K562 (cell line): ENCODE measurements at regions of chr1 and their contacts with region 1.

Region 1: GRCh38 chr1:44049839-44050238 is 18.6 kb upstream of the SLC6A9 start:
- DNase-seq: no peak
- ATAC-seq: no peak
- H3K4me3 ChIP-seq: no peak overlapping the region
- H3K27ac ChIP-seq: no peak overlapping the region
- H3K4me1 ChIP-seq: peaks cover 10 to 30% of the 10 kb centered on the region in 2 experiments; a peak in 4 of 5 replicates
- H3K27me3 ChIP-seq: no peaks in the 10 kb centered on the region
- CTCF ChIP-seq: no peak
- EP300 ChIP-seq: no peak
- POLR2A ChIP-seq: no peak
- RAD21 ChIP-seq: no peak

Region 2: DNA sequence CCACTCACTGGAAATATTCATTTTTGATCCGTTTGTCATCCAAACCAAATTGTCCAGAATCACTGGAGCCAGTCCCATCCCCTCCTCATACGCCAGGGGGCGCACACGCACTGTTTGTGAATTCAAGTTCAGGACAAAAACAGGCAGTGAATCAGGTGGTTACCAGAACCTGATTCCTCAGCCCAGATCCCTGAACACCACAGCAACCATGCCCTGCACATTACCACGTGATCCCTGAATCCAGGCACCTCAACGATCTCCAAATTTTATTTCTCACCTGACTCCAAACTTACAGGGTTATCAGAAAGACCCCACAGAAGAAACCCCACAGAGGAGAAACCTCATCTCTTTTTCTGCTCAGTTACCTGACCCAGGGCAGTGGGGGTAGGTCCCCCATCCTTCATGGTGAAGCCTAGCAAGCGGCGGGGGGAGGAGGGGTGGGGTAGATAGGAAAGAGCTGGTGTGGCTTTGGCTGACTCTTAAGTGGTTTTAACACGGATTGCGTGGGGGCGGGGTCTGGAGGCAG is 520.6 kb before region 1 on chr1:
- CTCF ChIA-PET with region 1: no interaction called
- POLR2A ChIA-PET with region 1: no interaction called
- in situ Hi-C with region 1: loop called (anchors 5 kb)
- intact Hi-C with region 1: loop called (anchors 2 kb)
- DNase-seq: peak; percentile 76 to 92 (median 83)
- ATAC-seq: peak; percentile 84
- H3K4me3 ChIP-seq: no peak overlapping the region
- H3K27ac ChIP-seq: no peak overlapping the region
- H3K4me1 ChIP-seq: peaks cover 12 to 28% of the 10 kb centered on the region in 2 experiments; a peak in 4 of 5 replicates
- H3K27me3 ChIP-seq: peaks cover 26 to 37% of the 10 kb centered on the region in 2 experiments; a peak in 4 of 5 replicates
- CTCF ChIP-seq: peak; percentile 89 to 98 (median 98)
- EP300 ChIP-seq: no peak
- POLR2A ChIP-seq: no peak
- RAD21 ChIP-seq: peak; percentile 91 to 98

Region 3: DNA sequence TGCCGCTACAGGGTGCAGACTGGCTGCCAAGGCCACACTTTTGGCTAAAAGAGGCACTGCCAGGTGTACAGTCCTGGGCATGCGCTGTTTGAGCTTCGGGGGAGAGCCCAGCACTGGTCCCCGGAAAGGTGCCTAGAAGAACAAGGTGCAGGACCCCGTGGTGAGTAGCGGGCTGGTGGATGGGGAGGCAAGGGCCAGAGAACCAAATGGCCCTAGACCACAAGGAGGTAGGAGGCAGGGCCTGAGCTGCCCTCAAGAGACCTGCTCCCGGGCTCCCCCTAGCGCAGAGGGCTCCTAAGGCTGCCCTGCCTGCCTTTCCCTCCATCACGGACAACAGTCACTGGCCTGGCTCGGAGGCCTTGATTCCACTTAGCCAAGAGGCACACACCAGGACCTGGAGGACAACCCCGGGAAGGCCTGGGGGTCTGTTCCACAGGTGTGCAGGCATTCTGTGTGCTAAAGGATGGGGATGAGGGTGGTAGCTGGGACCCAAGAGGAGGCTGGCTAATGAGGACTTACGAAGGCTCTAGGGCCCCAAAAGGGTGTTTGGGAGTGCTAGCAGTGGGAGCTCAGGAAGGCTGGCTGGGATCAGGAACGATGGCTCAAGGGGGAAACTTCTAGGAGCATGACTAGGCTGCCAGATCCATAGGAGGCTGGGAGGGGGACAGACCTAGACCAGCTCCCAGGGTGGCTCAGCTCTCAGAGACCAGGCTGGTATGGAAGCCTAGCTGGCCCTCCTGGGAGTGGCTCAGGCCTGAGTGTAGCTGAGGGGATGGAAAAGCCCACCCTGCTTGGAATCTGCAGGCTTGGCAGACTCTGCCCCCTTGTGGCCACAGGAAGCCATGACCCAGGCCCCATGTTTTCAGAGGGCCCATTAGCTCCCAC is 115.5 kb before region 1 on chr1:
- CTCF ChIA-PET with region 1: no interaction called
- POLR2A ChIA-PET with region 1: interaction called, 3 read pairs
- in situ Hi-C with region 1: no loop called
- intact Hi-C with region 1: loop called (anchors 5 kb)
- DNase-seq: peak; percentile 86 to 90 (median 88)
- ATAC-seq: peak; percentile 95
- H3K4me3 ChIP-seq: no peak overlapping the region
- H3K27ac ChIP-seq: no peak overlapping the region
- H3K4me1 ChIP-seq: peaks cover 12 to 32% of the 10 kb centered on the region in 2 experiments; a peak in 4 of 5 replicates
- H3K27me3 ChIP-seq: no peaks in the 10 kb centered on the region
- CTCF ChIP-seq: peak; percentile 95 to 99 (median 98)
- EP300 ChIP-seq: no peak
- POLR2A ChIP-seq: no peak
- RAD21 ChIP-seq: peak; percentile 89 to 97

Region 4: DNA sequence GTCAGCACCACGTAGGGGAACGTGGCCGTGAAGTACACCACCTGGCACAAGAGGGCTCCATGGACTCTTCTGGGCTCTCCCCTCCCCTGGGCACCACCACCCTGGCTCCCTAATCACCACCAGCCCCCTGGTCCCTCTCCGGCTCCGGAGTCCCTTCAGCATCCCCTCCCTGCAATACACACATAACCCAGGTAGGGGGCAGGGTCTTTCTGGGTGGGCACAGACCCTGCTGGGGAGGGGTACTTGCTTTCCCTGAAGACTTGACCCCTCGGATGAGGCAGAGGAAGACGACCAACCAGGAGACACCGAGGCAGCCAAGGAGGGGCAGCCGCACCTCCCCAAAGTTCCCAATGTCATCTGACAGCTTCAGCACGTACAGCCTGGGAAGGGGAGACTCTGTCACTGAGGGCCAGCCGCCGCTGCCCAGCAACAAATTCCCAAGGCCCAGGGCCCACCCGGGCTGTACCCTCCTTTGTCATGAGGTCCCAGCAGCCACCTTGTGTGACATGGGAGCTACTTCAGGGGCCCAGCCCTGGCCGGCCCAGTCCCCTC is 47.2 kb before region 1 on chr1:
- CTCF ChIA-PET with region 1: interaction called, 33 read pairs
- POLR2A ChIA-PET with region 1: interaction called, 3 read pairs
- in situ Hi-C with region 1: no loop called
- intact Hi-C with region 1: loop called (anchors 1 kb)
- DNase-seq: no peak
- ATAC-seq: no peak
- H3K4me3 ChIP-seq: no peak overlapping the region
- H3K27ac ChIP-seq: no peak overlapping the region
- H3K4me1 ChIP-seq: peaks cover 0 to 49% of the 10 kb centered on the region in 2 experiments; a peak in 3 of 5 replicates
- H3K27me3 ChIP-seq: no peaks in the 10 kb centered on the region
- CTCF ChIP-seq: peak; percentile 20 to 50 (median 48); a peak in 4 of 6 replicates
- EP300 ChIP-seq: no peak
- POLR2A ChIP-seq: no peak
- RAD21 ChIP-seq: no peak

Region 5: DNA sequence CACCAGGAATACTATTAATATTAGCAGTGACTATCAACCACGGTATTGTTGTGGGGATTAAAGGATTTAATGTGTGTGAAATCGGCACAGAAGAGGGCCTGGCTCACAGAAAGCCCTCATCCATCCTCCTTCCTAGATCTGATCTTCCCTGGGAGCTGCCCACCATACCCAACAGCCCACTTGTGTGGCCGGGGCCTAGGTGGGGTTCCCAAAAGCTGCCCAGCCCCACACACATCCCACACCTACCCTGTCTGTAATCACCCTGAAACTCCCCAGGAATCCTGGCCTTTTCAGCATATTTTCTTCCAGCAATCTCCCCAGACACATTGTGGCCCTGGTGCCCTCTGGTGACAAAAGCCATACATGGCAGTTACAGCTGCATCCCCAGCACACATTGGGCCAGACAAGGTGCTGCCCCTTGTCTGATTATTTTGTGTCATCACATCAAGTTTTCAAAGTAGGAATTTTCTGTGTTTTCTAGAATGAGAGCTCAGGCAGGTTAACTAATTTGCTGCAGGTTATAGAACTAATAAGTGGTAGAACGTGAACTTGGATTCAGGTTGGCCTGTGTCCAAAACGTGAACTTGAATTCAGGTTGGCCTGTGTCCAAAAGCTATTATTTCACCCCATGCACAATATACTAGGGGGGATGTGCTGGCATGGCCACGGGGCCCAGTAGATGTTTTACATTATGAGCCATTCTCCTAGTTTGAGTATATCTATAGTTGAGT is 13.3 kb before region 1 on chr1:
- CTCF ChIA-PET with region 1: interaction called, 4 read pairs
- POLR2A ChIA-PET with region 1: interaction called, 17 read pairs
- in situ Hi-C with region 1: no loop called
- intact Hi-C with region 1: no loop called
- DNase-seq: peak; percentile 73 to 93 (median 78)
- ATAC-seq: peak; percentile 74
- H3K4me3 ChIP-seq: no peak overlapping the region
- H3K27ac ChIP-seq: peak overlapping the region; percentile 53
- H3K4me1 ChIP-seq: peaks cover 60 to 63% of the 10 kb centered on the region in 2 experiments
- H3K27me3 ChIP-seq: no peaks in the 10 kb centered on the region
- CTCF ChIP-seq: peak; percentile 94 to 95 (median 95)
- EP300 ChIP-seq: peak; percentile 63; the same call in 1 of the 2 replicates
- POLR2A ChIP-seq: no peak
- RAD21 ChIP-seq: peak; percentile 87 to 96

Region 6: GRCh38 chr1:44251989-44252671 is 202.3 kb after region 1 on chr1:
- CTCF ChIA-PET with region 1: no interaction called
- POLR2A ChIA-PET with region 1: no interaction called
- in situ Hi-C with region 1: no loop called
- intact Hi-C with region 1: no loop called
- DNase-seq: no peak
- ATAC-seq: no peak
- H3K4me3 ChIP-seq: no peak overlapping the region
- H3K27ac ChIP-seq: no peak overlapping the region
- H3K4me1 ChIP-seq: peaks cover 0 to 18% of the 10 kb centered on the region in 2 experiments; a peak in 2 of 5 replicates
- H3K27me3 ChIP-seq: no peaks in the 10 kb centered on the region
- CTCF ChIP-seq: no peak
- EP300 ChIP-seq: no peak
- POLR2A ChIP-seq: no peak
- RAD21 ChIP-seq: no peak